CD8-positive, alpha-beta T cell (primary cell): ENCODE measurements at regions of chr1 and their contacts with region 1.

Region 1: GRCh38 chr1:88983791-88984559 is 8.5 kb downstream of the KYAT3 start:
- DNase-seq: peak in 4 of 9 experiments; percentile 23 to 83 (median 61)
- ATAC-seq: peak; percentile 85
- H3K4me3 ChIP-seq: no peak overlapping the region
- H3K4me3 Mint-ChIP-seq: peak overlapping the region; percentile 47
- H3K27ac ChIP-seq: peak overlapping the region in 1 of 2 experiments; percentile 38
- H3K27ac Mint-ChIP-seq: peak overlapping the region; percentile 52
- H3K4me1 ChIP-seq: peaks cover 15% of the 10 kb centered on the region
- H3K4me1 Mint-ChIP-seq: peaks cover 62% of the 10 kb centered on the region
- H3K27me3 ChIP-seq: no peaks in the 10 kb centered on the region
- H3K27me3 Mint-ChIP-seq: no peaks in the 10 kb centered on the region
- CTCF ChIP-seq: peak; percentile 69

Region 2: GRCh38 chr1:88917321-88918025 is 66.5 kb before region 1 on chr1:
- CTCF ChIA-PET with region 1: no interaction called
- POLR2A ChIA-PET with region 1: no interaction called
- intact Hi-C with region 1: no loop called
- DNase-seq: no peak
- ATAC-seq: no peak
- H3K4me3 ChIP-seq: no peak overlapping the region
- H3K4me3 Mint-ChIP-seq: no peak overlapping the region
- H3K27ac ChIP-seq: no peak overlapping the region
- H3K27ac Mint-ChIP-seq: no peak overlapping the region
- H3K4me1 ChIP-seq: no peaks in the 10 kb centered on the region
- H3K4me1 Mint-ChIP-seq: no peaks in the 10 kb centered on the region
- H3K27me3 ChIP-seq: no peaks in the 10 kb centered on the region
- H3K27me3 Mint-ChIP-seq: no peaks in the 10 kb centered on the region
- CTCF ChIP-seq: no peak

Region 3: GRCh38 chr1:88973520-88974137 is 10.3 kb before region 1 on chr1:
- CTCF ChIA-PET with region 1: interaction called, 58 read pairs
- POLR2A ChIA-PET with region 1: interaction called, 3 read pairs
- intact Hi-C with region 1: no loop called
- DNase-seq: peak in 2 of 9 experiments; percentile 56 to 66
- ATAC-seq: peak; percentile 52
- H3K4me3 ChIP-seq: no peak overlapping the region
- H3K4me3 Mint-ChIP-seq: no peak overlapping the region
- H3K27ac ChIP-seq: no peak overlapping the region
- H3K27ac Mint-ChIP-seq: no peak overlapping the region
- H3K4me1 ChIP-seq: no peaks in the 10 kb centered on the region
- H3K4me1 Mint-ChIP-seq: peaks cover 17% of the 10 kb centered on the region
- H3K27me3 ChIP-seq: no peaks in the 10 kb centered on the region
- H3K27me3 Mint-ChIP-seq: no peaks in the 10 kb centered on the region
- CTCF ChIP-seq: peak; percentile 75

Region 4: DNA sequence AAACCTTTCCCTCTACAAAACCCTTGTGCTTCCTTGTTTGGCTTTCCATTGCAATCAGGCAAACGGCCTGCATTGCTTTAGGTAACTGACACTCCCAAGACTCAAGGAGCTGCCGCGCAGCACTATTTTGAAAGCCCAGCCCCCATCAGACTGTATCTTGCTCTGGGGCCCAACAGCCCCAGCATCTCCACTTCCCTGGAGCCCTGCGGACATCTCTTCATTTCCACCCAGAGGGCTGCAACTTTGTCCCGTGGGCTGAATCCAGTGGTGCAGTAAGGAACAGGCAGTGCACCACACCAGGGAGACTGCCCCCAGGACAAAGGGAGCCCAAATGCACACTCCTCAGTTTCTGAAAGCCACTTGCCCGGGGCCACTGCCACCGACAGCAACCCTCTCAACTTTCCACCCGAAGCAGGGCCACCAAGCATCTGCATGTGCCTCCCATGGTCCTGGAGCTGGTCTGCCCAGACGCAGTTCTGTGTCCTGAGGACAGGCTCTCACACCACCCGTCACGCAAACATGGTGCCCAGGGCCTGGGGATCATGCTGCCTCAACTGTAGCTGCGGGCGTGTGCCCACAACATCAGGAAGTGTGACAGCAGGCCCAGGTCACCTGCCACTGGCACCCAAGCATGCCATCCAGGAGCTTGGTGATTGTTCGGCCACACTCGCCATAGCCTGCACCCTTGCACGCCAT is 66.5 kb after region 1 on chr1:
- CTCF ChIA-PET with region 1: no interaction called
- POLR2A ChIA-PET with region 1: no interaction called
- intact Hi-C with region 1: no loop called
- DNase-seq: no peak
- ATAC-seq: no peak
- H3K4me3 ChIP-seq: no peak overlapping the region
- H3K4me3 Mint-ChIP-seq: no peak overlapping the region
- H3K27ac ChIP-seq: no peak overlapping the region
- H3K27ac Mint-ChIP-seq: peak overlapping the region; percentile 70
- H3K4me1 ChIP-seq: no peaks in the 10 kb centered on the region
- H3K4me1 Mint-ChIP-seq: no peaks in the 10 kb centered on the region
- H3K27me3 ChIP-seq: no peaks in the 10 kb centered on the region
- H3K27me3 Mint-ChIP-seq: no peaks in the 10 kb centered on the region
- CTCF ChIP-seq: no peak

Region 5: DNA sequence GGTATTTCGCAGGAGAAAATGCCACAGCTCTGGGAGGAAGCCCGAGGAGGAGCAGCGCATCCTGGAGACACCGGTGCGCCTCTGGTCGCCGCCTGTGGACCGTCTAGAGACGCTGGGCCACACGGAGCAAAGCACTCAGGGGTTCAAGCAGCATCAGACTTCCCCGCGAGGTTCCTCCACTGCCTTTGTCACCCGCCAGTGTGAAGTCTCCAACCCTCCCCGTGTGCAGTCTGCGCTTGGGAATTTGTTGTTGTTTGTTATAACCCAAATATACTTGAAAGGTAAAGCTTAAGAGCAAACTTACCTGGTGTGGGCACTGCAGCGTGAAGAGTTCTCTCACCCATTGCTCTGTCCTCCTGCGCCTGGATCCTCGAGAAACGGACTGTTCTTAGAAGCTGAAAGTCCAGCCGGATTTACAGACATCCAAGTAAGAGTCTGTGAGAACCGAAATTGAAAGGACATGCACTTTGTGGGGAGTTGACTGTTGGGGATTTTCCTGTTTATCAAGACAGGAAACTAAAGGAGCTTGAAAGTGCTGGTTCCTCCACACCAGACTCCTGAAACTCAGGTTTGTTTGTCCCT is 214.6 kb after region 1 on chr1 and contains the start of gene GBP4:
- CTCF ChIA-PET with region 1: no interaction called
- POLR2A ChIA-PET with region 1: no interaction called
- intact Hi-C with region 1: loop called in 1 of 2 experiments (anchors 5 kb)
- DNase-seq: peak in 8 of 9 experiments; percentile 31 to 84 (median 55)
- ATAC-seq: peak; percentile 50
- H3K4me3 ChIP-seq: peak within 1 kb of the TSS; percentile 70 to 87
- H3K4me3 Mint-ChIP-seq: peak within 1 kb of the TSS; percentile 95
- H3K27ac ChIP-seq: peak within 1 kb of the TSS; percentile 80 to 86
- H3K27ac Mint-ChIP-seq: peak within 1 kb of the TSS; percentile 93
- H3K4me1 ChIP-seq: peaks cover 57% of the 10 kb centered on the region
- H3K4me1 Mint-ChIP-seq: peaks cover 68% of the 10 kb centered on the region
- H3K27me3 ChIP-seq: no peaks in the 10 kb centered on the region
- H3K27me3 Mint-ChIP-seq: no peaks in the 10 kb centered on the region
- CTCF ChIP-seq: no peak
- total RNA-seq, gene GBP4: 16.6 to 17.5 TPM

Region 6: DNA sequence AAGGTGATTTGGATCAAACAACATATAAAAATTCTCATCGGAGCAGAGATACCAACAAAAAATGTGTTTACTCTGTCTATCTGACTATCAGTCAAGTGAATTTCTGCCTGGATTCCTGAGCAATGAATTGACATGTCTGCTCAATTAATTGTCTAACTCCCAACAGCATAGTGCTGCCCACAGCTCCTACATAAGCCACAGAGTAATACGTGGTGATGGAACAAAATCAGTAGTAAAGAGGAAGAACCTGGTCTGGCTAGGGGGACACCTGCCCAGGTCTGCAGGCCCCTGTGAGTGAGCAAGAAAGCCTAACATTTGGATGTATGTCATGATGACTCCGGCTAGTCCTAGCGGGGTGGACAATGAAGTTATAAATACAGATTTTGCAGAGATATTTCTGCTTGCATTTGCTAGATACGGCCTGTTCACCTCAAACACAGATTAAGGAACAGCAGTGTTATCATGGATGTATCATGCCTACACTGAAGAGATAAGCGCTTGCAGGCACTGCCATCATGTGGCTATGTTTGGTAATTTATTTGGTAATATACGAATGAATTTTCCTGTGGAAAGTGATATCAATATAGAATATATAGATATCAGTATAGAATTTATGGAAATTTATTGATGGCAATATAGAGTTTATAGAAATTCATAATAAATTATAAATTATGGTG is 471.0 kb after region 1 on chr1:
- CTCF ChIA-PET with region 1: interaction called, 50 read pairs
- POLR2A ChIA-PET with region 1: interaction called, 4 read pairs
- intact Hi-C with region 1: loop called in 1 of 2 experiments (anchors 1 kb)
- DNase-seq: peak; percentile 15 to 77 (median 60)
- ATAC-seq: peak; percentile 94
- H3K4me3 ChIP-seq: no peak overlapping the region
- H3K4me3 Mint-ChIP-seq: no peak overlapping the region
- H3K27ac ChIP-seq: no peak overlapping the region
- H3K27ac Mint-ChIP-seq: no peak overlapping the region
- H3K4me1 ChIP-seq: no peaks in the 10 kb centered on the region
- H3K4me1 Mint-ChIP-seq: peaks cover 7% of the 10 kb centered on the region
- H3K27me3 ChIP-seq: no peaks in the 10 kb centered on the region
- H3K27me3 Mint-ChIP-seq: peaks cover 7% of the 10 kb centered on the region
- CTCF ChIP-seq: peak; percentile 96